Right ventricle myocardium inferior (tissue), 1 donor: ENCODE measurements at regions of chr17 and their contacts with region 1.

Region 1: DNA sequence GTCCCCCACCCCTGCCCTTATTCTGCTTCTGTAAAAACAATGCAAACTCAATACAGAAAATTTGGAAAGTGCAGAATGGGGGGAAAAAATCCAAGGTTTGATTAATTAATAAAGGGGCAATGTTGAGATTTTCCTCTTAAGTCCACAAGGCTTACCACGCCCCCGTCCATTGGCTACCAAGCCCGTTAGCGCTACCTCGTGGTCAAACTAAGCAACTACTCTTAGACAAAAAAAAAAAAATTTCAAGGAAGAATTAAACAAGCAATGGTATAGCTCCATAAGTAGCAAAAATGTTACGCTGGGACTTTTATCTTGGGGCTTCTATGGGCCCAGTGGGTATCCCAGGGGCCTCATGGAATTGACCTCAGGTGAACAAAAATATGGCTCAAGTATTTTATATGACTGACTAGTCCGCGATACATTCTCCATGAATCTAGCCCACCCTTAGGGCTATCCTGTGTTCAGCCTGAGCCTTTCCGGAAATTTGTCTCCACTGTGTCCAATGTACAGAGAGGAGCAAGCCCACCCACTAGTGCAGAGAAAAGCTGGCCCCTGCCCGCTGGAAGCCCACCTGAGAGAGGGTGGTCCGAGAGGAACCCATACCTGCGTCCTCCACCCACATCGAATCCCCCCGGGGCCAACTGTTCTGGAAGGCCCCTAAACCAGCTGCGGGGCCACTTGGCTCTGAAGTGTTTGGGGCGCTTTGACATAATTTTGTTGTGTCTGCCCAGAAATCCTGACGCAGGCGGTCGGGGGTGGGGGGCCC is 19.1 kb upstream of the TEX2 start:
- DNase-seq: peak; percentile 80
- ATAC-seq: peak; percentile 43

Region 2: DNA sequence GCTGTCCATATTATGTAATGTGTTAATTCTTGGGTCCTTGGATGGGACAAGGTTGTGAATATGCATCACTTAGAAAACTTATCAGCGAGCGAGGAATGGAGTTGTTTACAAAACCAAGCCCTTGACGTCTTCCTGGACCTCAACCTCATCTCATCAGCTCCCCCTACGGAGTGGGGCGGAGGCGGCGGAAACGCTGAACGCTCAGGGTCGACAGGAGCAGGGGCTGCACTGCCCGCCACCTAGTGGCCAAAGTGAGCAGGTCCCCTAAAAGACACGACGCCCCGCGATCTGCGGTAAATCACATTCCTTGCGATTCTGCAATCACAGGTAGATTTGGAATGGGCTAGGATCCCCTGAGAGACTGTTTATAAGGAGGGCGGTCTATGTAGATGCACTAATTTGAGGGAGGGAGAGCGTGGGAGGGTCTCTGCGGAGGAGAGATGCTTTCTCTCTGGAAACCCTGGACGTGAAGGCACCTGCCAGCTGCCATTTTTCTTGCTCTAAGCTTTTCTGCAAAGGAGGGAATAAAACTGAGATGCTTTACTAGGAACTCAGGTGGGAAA is 256.3 kb before region 1 on chr17:
- intact Hi-C with region 1: loop called (anchors 2 kb)
- DNase-seq: peak; percentile 86
- ATAC-seq: peak; percentile 61

Region 3: DNA sequence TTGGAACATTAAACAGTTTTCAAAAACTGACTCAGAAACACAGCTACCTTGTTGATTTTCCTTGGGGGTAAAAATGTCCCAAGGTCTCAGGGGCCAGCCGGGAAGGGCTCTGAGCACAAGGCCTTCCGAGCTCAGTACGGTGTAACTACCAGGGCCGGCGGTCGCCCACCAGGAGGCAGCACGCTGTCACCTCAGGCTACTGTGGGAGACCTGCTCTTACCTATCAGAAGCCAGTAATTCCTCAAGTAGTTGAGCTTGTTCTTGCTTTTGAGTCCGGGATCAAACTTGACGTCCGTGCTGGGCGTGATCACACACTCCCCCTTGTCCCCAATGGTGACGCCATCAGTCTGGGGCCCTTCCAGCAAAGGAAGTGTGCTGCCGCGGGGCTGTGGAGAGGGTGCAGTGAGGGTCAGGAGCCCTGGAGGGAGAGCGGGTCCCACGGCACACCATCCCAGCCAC is 218.3 kb before region 1 on chr17:
- intact Hi-C with region 1: loop called (anchors 10 kb)
- DNase-seq: peak; percentile 81
- ATAC-seq: peak; percentile 55